ENCODE measurements at regions of chr17 and their contacts with region 1.

Region 1: DNA sequence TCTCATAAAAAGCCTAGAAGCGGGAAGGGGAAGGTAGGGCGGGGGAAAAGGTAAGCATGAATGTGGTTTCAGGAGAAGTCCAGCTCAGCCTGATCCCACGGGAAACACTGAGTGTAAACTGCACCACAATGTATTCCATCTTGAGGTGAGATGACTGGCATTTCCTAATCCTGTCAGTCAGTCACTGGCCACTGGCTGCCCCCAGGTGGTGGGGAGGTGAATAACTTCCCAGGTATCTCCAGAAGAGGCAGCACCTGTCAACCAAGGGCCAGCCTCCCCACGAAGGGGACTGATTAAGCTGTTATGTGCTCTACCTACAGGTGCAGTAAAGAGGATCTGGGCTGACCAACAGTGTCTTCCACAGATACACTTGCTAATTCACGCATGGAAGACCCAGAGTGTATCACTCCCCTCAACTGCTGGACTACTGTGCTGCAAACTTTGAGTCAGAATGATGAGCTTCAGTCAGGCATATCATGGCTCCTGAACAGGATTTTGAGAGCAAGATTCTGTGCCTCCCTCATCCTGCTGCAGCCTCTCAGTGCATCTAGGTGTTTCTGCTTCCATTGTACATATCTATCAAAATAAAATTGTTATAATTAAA is 108.5 kb upstream of the CCL2 start:
- DNase-seq: peak; percentile 74
- H3K4me3 Mint-ChIP-seq: no peak overlapping the region
- H3K27ac Mint-ChIP-seq: no peak overlapping the region
- H3K4me1 Mint-ChIP-seq: no peaks in the 10 kb centered on the region
- H3K27me3 Mint-ChIP-seq: peaks cover 2% of the 10 kb centered on the region

Region 2: DNA sequence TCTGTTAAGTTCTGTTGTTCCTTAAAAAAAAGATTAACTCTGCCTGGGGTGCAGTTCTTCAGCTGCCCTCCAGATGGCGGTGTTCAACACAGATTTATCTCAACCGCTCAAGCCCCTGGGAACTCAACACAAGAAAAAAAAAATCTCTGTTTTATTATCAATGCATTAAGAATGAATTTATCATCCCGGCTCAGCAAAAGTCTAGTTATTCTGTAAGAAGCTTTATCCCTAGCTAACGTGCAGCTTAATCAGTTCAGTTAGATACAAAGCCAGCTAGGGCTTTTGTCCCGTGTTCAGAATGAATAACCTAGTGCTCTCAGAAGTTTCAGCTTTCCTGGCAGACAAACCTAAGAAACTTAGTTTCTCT is 367.3 kb before region 1 on chr17:
- CTCF ChIA-PET with region 1: interaction called, 55 read pairs
- POLR2A ChIA-PET with region 1: no interaction called
- intact Hi-C with region 1: loop called (anchors 1 kb)
- DNase-seq: peak; percentile 44
- H3K4me3 Mint-ChIP-seq: no peak overlapping the region
- H3K27ac Mint-ChIP-seq: no peak overlapping the region
- H3K4me1 Mint-ChIP-seq: no peaks in the 10 kb centered on the region
- H3K27me3 Mint-ChIP-seq: peaks cover 27% of the 10 kb centered on the region